T-cell (primary cell): ENCODE measurements at regions of chr1 and their contacts with region 1.

Region 1: GRCh38 chr1:223133824-223134435 is 9.1 kb downstream of the TLR5 start:
- DNase-seq: peak; percentile 23 to 88 (median 70)
- ATAC-seq: peak; percentile 84 to 91 (median 87)
- H3K4me3 ChIP-seq: peak overlapping the region; percentile 19 to 24
- H3K4me3 Mint-ChIP-seq: peak overlapping the region; percentile 55 to 64 (median 58)
- H3K27ac ChIP-seq: no peak overlapping the region
- H3K27ac Mint-ChIP-seq: peak overlapping the region in 1 of 2 donors; percentile 27
- H3K4me1 ChIP-seq: peaks cover 0 to 17% of the 10 kb centered on the region in 2 experiments
- H3K4me1 Mint-ChIP-seq: peaks cover 6 to 34% (median 21%) of the 10 kb centered on the region in 3 donors
- H3K27me3 ChIP-seq: peaks cover 0 to 21% of the 10 kb centered on the region in 2 experiments
- H3K27me3 Mint-ChIP-seq: peaks cover 4 to 7% of the 10 kb centered on the region in 2 donors

Region 2: GRCh38 chr1:222421380-222421779 is 712.5 kb before region 1 on chr1:
- CTCF ChIA-PET with region 1: interaction called in 1 of 2 experiments, 10 read pairs
- POLR2A ChIA-PET with region 1: no interaction called
- DNase-seq: no peak
- ATAC-seq: no peak
- H3K4me3 ChIP-seq: no peak overlapping the region
- H3K4me3 Mint-ChIP-seq: peak overlapping the region in 2 of 3 donors; percentile 51 to 66
- H3K27ac ChIP-seq: peak overlapping the region; percentile 69
- H3K27ac Mint-ChIP-seq: peak overlapping the region; percentile 97 to 99
- H3K4me1 ChIP-seq: peaks cover 34 to 39% of the 10 kb centered on the region in 2 experiments
- H3K4me1 Mint-ChIP-seq: peaks cover 69 to 75% (median 73%) of the 10 kb centered on the region in 3 donors
- H3K27me3 ChIP-seq: no peaks in the 10 kb centered on the region
- H3K27me3 Mint-ChIP-seq: no peaks in the 10 kb centered on the region

Region 3: GRCh38 chr1:222880586-222880985 is 253.3 kb before region 1 on chr1:
- CTCF ChIA-PET with region 1: no interaction called
- POLR2A ChIA-PET with region 1: no interaction called
- DNase-seq: no peak
- ATAC-seq: peak in 3 of 4 experiments; percentile 34 to 61 (median 41)
- H3K4me3 ChIP-seq: no peak overlapping the region
- H3K4me3 Mint-ChIP-seq: no peak overlapping the region
- H3K27ac ChIP-seq: no peak overlapping the region
- H3K27ac Mint-ChIP-seq: no peak overlapping the region
- H3K4me1 ChIP-seq: peaks cover 2% of the 10 kb centered on the region in 2 experiments
- H3K4me1 Mint-ChIP-seq: peaks cover 11 to 27% (median 14%) of the 10 kb centered on the region in 3 donors
- H3K27me3 ChIP-seq: no peaks in the 10 kb centered on the region
- H3K27me3 Mint-ChIP-seq: no peaks in the 10 kb centered on the region

Region 4: DNA sequence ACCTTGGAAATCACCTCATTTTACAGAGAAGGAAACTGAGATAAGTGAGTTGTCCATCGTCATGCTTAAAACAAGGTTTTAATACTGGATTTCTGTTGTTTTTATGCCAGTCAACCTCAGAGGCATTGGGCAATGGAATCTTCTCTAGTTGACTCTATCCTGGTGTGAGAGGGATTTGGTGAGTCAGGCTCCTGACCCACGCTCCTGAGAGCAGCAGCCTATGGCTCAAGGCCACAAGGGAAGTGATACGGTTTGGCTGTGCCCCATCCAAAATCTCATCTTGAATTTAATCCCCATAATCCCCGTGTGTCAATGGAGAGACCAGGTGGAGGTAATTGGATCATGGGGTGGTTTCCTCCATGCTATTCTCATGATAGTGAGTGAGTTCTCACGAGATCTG is 81.0 kb before region 1 on chr1:
- CTCF ChIA-PET with region 1: no interaction called
- POLR2A ChIA-PET with region 1: no interaction called
- DNase-seq: no peak
- ATAC-seq: no peak
- H3K4me3 ChIP-seq: no peak overlapping the region
- H3K4me3 Mint-ChIP-seq: no peak overlapping the region
- H3K27ac ChIP-seq: no peak overlapping the region
- H3K27ac Mint-ChIP-seq: no peak overlapping the region
- H3K4me1 ChIP-seq: no peaks in the 10 kb centered on the region
- H3K4me1 Mint-ChIP-seq: no peaks in the 10 kb centered on the region
- H3K27me3 ChIP-seq: peaks cover 0 to 26% of the 10 kb centered on the region in 2 experiments
- H3K27me3 Mint-ChIP-seq: peaks cover 0 to 13% of the 10 kb centered on the region in 2 donors

Region 5: GRCh38 chr1:223123011-223123610 is 10.8 kb before region 1 on chr1:
- CTCF ChIA-PET with region 1: interaction called, 15 to 41 read pairs
- POLR2A ChIA-PET with region 1: no interaction called
- DNase-seq: no peak
- ATAC-seq: no peak
- H3K4me3 ChIP-seq: peak overlapping the region in 1 of 2 donors; percentile 9
- H3K4me3 Mint-ChIP-seq: peak overlapping the region; percentile 60 to 65 (median 63)
- H3K27ac ChIP-seq: no peak overlapping the region
- H3K27ac Mint-ChIP-seq: no peak overlapping the region
- H3K4me1 ChIP-seq: peaks cover 0 to 4% of the 10 kb centered on the region in 2 experiments
- H3K4me1 Mint-ChIP-seq: peaks cover 7 to 8% (median 8%) of the 10 kb centered on the region in 3 donors
- H3K27me3 ChIP-seq: no peaks in the 10 kb centered on the region
- H3K27me3 Mint-ChIP-seq: peaks cover 0 to 1% of the 10 kb centered on the region in 2 donors

Region 6: GRCh38 chr1:223161321-223161720 is 27.4 kb after region 1 on chr1:
- CTCF ChIA-PET with region 1: interaction called in 1 of 2 experiments, 5 read pairs
- POLR2A ChIA-PET with region 1: interaction called in 1 of 2 experiments, 10 read pairs
- DNase-seq: peak in 1 of 35 experiments; percentile 17
- ATAC-seq: peak in 1 of 4 experiments; percentile 47
- H3K4me3 ChIP-seq: no peak overlapping the region
- H3K4me3 Mint-ChIP-seq: no peak overlapping the region
- H3K27ac ChIP-seq: no peak overlapping the region
- H3K27ac Mint-ChIP-seq: no peak overlapping the region
- H3K4me1 ChIP-seq: peaks cover 2 to 3% of the 10 kb centered on the region in 2 experiments
- H3K4me1 Mint-ChIP-seq: peaks cover 4 to 8% (median 8%) of the 10 kb centered on the region in 3 donors
- H3K27me3 ChIP-seq: peaks cover 0 to 6% of the 10 kb centered on the region in 2 experiments
- H3K27me3 Mint-ChIP-seq: no peaks in the 10 kb centered on the region

Region 7: DNA sequence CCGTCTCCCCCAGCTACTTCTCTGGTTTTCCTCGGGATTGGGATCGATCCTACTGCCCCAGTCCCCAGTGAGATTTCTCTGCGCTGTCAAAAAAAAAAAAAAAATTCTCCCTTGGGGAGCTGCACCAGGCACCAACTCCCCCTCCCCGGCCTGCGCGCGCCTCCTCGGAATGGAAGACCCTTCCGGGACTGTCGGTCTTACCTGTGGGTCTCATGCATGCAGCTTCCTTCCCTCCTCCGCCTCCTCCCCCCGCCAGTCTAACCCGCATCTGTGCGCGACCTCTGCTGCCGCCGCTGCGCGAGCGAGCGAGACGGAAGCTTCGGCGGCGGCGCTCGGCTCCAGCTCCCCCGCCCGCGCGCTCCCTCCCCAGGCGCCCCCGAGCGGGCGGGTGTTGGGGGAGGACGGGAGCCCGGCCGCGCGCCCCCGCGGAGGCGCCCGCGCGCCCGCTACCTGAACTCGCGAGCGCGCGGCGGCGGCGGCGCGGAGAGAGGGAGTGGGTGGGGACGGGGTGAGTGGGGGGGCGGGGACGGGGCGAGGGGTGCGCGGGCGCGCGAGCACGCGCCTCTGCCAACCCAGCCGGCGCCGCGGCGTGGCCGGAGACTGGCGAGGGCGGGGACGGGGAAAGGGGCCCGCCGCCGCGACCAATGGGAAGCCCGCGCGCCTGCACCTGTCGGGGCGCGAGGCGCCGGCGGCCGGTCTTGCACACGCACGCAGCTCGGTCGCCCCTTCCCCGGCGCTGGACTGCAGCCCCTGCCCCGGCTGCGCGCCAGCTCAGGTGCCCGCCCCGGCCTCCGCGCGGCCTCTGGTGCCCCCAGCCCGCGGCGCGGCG is 230.1 kb after region 1 on chr1 and contains the start of gene SUSD4:
- CTCF ChIA-PET with region 1: interaction called, 5 to 14 read pairs
- POLR2A ChIA-PET with region 1: no interaction called
- DNase-seq: peak; percentile 44 to 86 (median 69)
- ATAC-seq: peak; percentile 86 to 91 (median 86)
- H3K4me3 ChIP-seq: peak within 1 kb of the TSS; percentile 70 to 80
- H3K4me3 Mint-ChIP-seq: peak within 1 kb of the TSS; percentile 85 to 91 (median 90)
- H3K27ac ChIP-seq: no peak within 1 kb of the TSS
- H3K27ac Mint-ChIP-seq: peak within 1 kb of the TSS; percentile 34 to 69
- H3K4me1 ChIP-seq: peaks cover 13 to 24% of the 10 kb centered on the region in 2 experiments
- H3K4me1 Mint-ChIP-seq: peaks cover 14 to 29% (median 21%) of the 10 kb centered on the region in 3 donors
- H3K27me3 ChIP-seq: peaks cover 0 to 20% of the 10 kb centered on the region in 2 experiments
- H3K27me3 Mint-ChIP-seq: peaks cover 0 to 4% of the 10 kb centered on the region in 2 donors
- total RNA-seq, gene SUSD4: 1.3 to 16.7 (median 6.4) TPM

Region 8: GRCh38 chr1:223520200-223520599 is 386.3 kb after region 1 on chr1:
- CTCF ChIA-PET with region 1: interaction called in 1 of 2 experiments, 12 read pairs
- POLR2A ChIA-PET with region 1: no interaction called
- DNase-seq: no peak
- ATAC-seq: no peak
- H3K4me3 ChIP-seq: no peak overlapping the region
- H3K4me3 Mint-ChIP-seq: no peak overlapping the region
- H3K27ac ChIP-seq: no peak overlapping the region
- H3K27ac Mint-ChIP-seq: no peak overlapping the region
- H3K4me1 ChIP-seq: peaks cover 18 to 20% of the 10 kb centered on the region in 2 experiments
- H3K4me1 Mint-ChIP-seq: peaks cover 10 to 24% (median 18%) of the 10 kb centered on the region in 3 donors
- H3K27me3 ChIP-seq: peaks cover 0 to 4% of the 10 kb centered on the region in 2 experiments
- H3K27me3 Mint-ChIP-seq: peaks cover 0 to 5% of the 10 kb centered on the region in 2 donors

Region 9: DNA sequence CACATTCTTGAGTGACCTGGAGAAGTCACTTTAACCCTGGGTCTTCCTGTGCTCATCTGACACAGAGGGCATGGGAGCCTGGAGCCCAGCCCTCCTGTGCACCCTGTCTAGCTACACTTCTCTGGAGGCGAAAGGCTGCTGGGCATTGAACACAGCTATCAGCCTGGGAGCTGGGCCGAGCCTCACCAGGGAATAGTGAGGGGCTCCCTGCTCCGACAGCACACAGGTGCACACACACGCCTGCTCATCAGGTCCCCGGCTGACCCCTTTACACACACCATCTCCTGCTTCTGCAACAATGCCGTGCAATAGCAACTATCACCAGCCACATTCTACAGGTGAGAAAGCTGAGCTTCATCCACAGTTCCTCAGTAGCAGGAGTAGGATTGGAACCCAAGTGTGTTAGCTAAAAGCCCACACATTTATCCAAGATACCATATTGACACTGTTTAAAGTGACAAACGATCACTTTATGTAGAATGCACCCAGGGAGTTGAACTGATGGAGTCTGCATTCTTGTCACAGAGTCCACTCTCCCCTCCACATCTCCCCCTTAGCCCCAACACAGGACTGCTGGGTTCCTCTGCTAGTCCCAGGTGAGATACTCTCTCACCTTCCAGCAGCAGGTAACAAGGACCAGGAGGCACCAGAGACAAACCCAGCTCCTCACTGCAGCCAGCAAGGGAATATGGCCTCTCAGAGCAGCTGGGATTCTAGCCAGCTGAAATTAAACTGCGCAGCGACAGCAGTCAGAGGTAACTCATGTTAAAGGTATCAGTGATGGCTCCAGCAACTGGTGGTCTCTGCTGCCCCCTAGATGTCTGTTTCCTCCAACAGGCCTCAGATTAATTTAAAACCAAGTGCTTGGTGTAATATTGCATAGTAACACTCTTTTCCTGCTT is 549.9 kb after region 1 on chr1:
- CTCF ChIA-PET with region 1: interaction called, 12 to 23 read pairs
- POLR2A ChIA-PET with region 1: no interaction called
- DNase-seq: peak; percentile 10 to 78 (median 49)
- ATAC-seq: peak in 3 of 4 experiments; percentile 52 to 80 (median 77)
- H3K4me3 ChIP-seq: no peak overlapping the region
- H3K4me3 Mint-ChIP-seq: no peak overlapping the region
- H3K27ac ChIP-seq: no peak overlapping the region
- H3K27ac Mint-ChIP-seq: no peak overlapping the region
- H3K4me1 ChIP-seq: peaks cover 0 to 3% of the 10 kb centered on the region in 2 experiments
- H3K4me1 Mint-ChIP-seq: peaks cover 0 to 3% (median 2%) of the 10 kb centered on the region in 3 donors
- H3K27me3 ChIP-seq: peaks cover 0 to 11% of the 10 kb centered on the region in 2 experiments
- H3K27me3 Mint-ChIP-seq: peaks cover 10% of the 10 kb centered on the region in 2 donors

Region 10: GRCh38 chr1:223845810-223846682 is 712.1 kb after region 1 on chr1 and contains the start of gene TP53BP2:
- CTCF ChIA-PET with region 1: no interaction called
- POLR2A ChIA-PET with region 1: no interaction called
- DNase-seq: peak; percentile 73 to 92 (median 81)
- ATAC-seq: peak; percentile 84 to 90 (median 86)
- H3K4me3 ChIP-seq: peak within 1 kb of the TSS; percentile 74 to 85
- H3K4me3 Mint-ChIP-seq: peak within 1 kb of the TSS; percentile 94 to 97 (median 96)
- H3K27ac ChIP-seq: peak within 1 kb of the TSS; percentile 88
- H3K27ac Mint-ChIP-seq: peak within 1 kb of the TSS; percentile 96 to 97
- H3K4me1 ChIP-seq: peaks cover 9 to 19% of the 10 kb centered on the region in 2 experiments
- H3K4me1 Mint-ChIP-seq: peaks cover 35 to 52% (median 38%) of the 10 kb centered on the region in 3 donors
- H3K27me3 ChIP-seq: no peaks in the 10 kb centered on the region
- H3K27me3 Mint-ChIP-seq: no peaks in the 10 kb centered on the region
- total RNA-seq, gene TP53BP2: 46.9 to 84.0 (median 53.1) TPM